Right ventricle myocardium inferior (tissue), 1 donor: ENCODE measurements at regions of chr10 and their contacts with region 1.

Region 1: DNA sequence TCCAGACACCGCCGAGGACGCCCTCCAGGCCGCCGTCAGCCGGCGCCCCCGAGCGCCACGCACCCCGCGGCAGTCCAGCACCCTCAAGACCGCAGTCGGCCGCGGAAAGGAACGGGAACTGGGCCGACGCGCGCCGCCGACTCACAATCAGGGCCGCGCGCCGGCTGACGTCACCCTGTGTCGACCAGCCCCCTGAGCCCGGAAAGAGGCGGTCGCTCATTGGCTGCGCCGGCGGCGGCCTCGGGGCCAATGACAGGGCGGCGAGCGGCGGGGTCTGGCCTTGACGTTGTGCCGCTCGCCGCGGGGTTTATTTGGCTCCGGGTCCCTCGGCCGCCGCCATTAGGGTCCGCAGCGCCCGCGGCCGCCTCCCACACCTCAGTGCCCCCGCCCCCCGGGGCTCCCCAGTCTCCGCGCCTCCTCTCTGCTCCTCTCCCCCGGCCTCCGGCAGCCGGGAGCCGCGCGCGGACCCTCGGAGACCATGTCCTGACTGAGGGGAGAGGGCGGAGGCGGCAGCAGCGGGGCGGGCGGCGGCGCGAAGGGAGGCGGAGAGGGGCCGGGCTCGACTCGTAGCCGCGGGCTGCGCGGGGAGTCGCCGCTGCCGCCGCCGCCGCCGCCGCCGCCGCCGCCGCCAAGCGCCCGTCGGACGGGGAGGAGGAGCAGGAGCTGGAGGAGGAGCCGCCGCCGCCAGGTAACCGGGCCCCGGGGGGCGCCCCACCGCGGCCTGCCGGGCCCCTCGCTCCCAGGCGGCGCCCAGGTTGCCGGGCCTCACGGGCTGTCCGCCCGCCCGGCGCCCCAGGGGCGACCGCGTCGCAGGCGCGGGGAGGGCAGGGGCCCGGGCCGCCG is 25.1 kb upstream of the ZRANB1 start:
- DNase-seq: peak; percentile 100
- ATAC-seq: peak; percentile 99

Region 2: DNA sequence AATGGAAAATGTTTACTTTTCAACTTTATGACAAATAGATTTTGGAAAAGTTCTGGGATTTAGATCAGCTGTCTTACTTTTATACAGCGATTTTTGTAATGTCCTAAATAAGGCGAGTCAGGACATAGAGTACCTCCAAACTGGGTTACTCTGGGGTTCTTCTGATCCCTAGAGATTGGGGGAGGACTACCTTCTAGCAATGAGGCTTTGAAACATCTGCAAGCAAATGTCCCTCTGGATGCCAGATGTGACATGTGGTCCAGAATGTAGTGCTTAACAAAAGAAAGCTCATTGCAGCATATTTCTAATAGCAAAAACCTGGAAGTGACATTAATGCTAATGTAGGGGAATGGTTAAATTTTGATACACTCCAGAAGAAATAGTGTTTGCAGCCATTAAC is 79.1 kb before region 1 on chr10:
- intact Hi-C with region 1: no loop called
- DNase-seq: no peak
- ATAC-seq: no peak

Region 3: GRCh38 chr10:124898471-124898870 is 18.3 kb before region 1 on chr10:
- intact Hi-C with region 1: no loop called
- DNase-seq: no peak
- ATAC-seq: no peak

Region 4: DNA sequence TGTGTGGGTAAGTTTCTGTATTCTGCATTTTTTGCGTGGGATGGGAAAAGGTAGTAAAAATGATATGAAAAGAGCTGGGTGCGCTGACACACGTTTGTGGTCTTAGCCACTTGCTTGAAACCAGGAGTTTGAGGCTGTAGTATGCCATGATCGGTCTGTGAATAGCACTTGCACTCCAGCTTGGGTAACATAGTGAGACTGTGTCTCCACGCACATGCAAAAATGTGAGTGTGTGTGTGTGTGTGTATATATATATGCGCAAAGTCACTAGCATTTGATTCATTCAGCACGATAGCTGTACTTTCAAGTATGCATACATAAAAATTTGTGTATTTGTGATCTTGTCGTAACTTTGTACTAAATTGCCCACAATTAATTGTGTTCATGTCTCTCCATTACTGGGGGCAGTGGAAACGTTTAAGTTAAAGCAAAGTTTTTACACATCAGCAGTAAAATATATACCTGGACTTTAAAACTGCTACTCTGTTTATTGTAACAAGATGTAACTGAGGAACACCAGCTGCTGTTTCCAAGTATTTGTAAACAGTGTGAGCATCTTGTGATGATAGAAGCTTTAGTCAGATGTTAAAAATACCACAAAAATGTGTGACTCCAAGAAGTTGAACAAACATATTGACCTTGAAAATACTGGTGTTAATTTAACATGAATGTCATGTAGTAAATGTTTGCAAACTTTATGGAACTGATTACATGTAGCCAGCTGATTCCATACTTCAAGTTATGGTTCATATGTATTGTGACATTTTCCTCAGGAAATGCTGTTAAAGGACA is 26.7 kb after region 1 on chr10:
- intact Hi-C with region 1: loop called (anchors 2 kb)
- DNase-seq: no peak
- ATAC-seq: peak; percentile 43

Region 5: GRCh38 chr10:124966008-124966407 is 49.2 kb after region 1 on chr10:
- intact Hi-C with region 1: loop called (anchors 5 kb)
- DNase-seq: no peak
- ATAC-seq: no peak